HepG2 (cell line): ENCODE measurements at regions of chr5 and their contacts with region 1.

Region 1: GRCh38 chr5:168317521-168318147 is 26.2 kb downstream of the WWC1 start:
- DNase-seq: peak; percentile 92
- ATAC-seq: no peak
- H3K4me3 ChIP-seq: no peak overlapping the region
- H3K27ac ChIP-seq: peak overlapping the region; percentile 41
- H3K4me1 ChIP-seq: peaks cover 60% of the 10 kb centered on the region
- H3K27me3 ChIP-seq: no peaks in the 10 kb centered on the region
- CTCF ChIP-seq: no peak
- EP300 ChIP-seq: 0 out of 4 replicates have a peak, but pooled peaks of 1 of the 2 experiments have one; percentile 30
- POLR2A ChIP-seq: no peak
- RAD21 ChIP-seq: no peak

Region 2: DNA sequence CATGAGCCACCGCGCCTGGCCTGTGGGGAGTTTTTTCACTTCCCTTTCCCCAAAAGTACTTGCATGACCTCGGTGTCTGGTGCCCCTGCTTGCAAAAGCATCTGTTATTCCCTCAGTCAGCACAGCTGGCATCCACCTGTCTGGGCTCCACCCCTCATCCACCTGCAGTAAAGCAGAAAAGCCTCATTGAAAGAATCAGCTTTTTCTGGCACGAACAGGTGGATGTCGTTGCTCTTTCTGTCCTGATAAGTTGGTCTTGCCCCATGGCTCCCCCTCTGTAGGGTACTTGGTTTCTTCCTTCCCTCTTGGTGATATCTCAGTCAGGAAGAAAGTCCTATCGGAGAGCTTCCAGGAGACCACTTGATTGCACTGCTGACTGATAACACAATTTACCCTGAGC is 11.2 kb after region 1 on chr5:
- CTCF ChIA-PET with region 1: no interaction called
- POLR2A ChIA-PET with region 1: interaction called, 29 read pairs
- in situ Hi-C with region 1: no loop called
- intact Hi-C with region 1: loop called (anchors 2 kb)
- DNase-seq: peak; percentile 70
- ATAC-seq: peak; percentile 81
- H3K4me3 ChIP-seq: peak overlapping the region; percentile 24 to 53 (median 24); a peak in 4 of 6 replicates
- H3K27ac ChIP-seq: peak overlapping the region; percentile 62
- H3K4me1 ChIP-seq: peaks cover 37% of the 10 kb centered on the region
- H3K27me3 ChIP-seq: no peaks in the 10 kb centered on the region
- CTCF ChIP-seq: no peak
- EP300 ChIP-seq: no peak
- POLR2A ChIP-seq: no peak
- RAD21 ChIP-seq: no peak

Region 3: DNA sequence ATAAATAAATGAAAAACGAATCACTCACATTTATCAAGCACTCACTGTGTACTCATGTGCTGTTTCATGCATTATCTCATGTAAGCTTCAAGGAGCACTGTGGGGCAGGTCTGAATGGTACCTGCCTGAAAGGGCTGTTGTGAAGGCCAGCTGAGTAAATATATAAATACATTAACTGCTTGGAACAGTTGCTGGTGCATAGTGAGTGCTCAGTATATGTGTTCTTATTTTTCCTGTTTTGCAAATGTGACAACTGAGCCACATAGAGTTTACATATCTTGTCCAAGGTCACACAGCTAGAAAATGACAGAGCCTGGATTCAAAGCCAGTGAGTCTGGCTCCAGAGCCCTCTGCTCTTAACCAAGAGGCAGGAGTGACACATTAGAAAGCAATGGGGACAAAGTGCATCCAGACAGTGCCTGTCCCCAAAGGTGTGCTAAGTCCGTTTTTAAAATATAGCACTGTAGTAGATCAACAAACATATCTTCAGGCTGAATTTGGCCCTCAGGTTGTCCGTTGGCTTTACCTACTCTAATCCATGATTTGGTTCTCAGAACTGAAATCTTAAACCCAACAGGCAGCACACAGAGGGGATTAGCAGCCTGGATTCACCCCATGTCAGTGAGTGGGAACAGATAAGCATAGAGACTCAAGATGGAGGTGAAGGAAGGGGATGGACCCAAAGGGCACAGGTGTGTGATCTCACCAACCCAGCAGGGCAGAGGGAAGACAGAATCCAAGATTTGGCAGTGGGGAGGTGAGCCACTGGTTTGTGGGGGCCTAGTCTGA is 44.7 kb after region 1 on chr5:
- CTCF ChIA-PET with region 1: no interaction called
- POLR2A ChIA-PET with region 1: interaction called, 11 read pairs
- in situ Hi-C with region 1: no loop called
- intact Hi-C with region 1: loop called (anchors 1 kb)
- DNase-seq: peak; percentile 97
- ATAC-seq: peak; percentile 91
- H3K4me3 ChIP-seq: peak overlapping the region in 1 of 3 experiments; percentile 34; a peak in 1 of 6 replicates
- H3K27ac ChIP-seq: peak overlapping the region; percentile 83
- H3K4me1 ChIP-seq: peaks cover 59% of the 10 kb centered on the region
- H3K27me3 ChIP-seq: no peaks in the 10 kb centered on the region
- CTCF ChIP-seq: 0 out of 2 replicates have a peak, but pooled peaks have one; percentile 10
- EP300 ChIP-seq: peak in 1 of 2 experiments; percentile 80; a peak in 2 of 4 replicates
- POLR2A ChIP-seq: no peak
- RAD21 ChIP-seq: no peak

Region 4: DNA sequence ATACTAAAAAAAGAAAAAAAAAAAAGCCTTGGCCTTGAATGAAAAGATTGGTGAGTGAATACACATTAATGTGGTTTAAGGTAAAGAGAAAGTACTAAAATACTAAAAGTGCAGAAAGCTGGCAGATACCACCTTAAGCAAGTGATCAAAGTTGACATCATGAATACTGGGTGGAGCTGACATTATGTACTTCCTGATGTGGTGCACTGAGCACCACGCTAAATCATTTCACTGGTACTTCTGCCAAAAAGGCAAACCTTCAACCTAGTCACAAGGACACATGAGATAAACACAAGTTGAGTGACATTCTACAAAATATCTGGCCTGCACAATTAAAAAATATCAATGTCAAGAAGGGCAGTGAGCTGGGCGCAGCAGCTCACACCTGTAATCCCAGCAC is 295.4 kb after region 1 on chr5:
- CTCF ChIA-PET with region 1: no interaction called
- POLR2A ChIA-PET with region 1: no interaction called
- in situ Hi-C with region 1: no loop called
- intact Hi-C with region 1: no loop called
- DNase-seq: no peak
- ATAC-seq: peak; percentile 43; the same call in 1 of the 3 replicates
- H3K4me3 ChIP-seq: no peak overlapping the region
- H3K27ac ChIP-seq: peak overlapping the region; percentile 23
- H3K4me1 ChIP-seq: peaks cover 44% of the 10 kb centered on the region
- H3K27me3 ChIP-seq: no peaks in the 10 kb centered on the region
- CTCF ChIP-seq: no peak
- EP300 ChIP-seq: no peak
- POLR2A ChIP-seq: no peak
- RAD21 ChIP-seq: no peak